IMR-90 (cell line): ENCODE measurements at regions of chr1 and their contacts with region 1.

Region 1: GRCh38 chr1:20640183-20640597 is 6.9 kb downstream of the PINK1 start:
- DNase-seq: peak; percentile 54
- ATAC-seq: peak; percentile 76
- H3K4me3 ChIP-seq: no peak overlapping the region
- H3K27ac ChIP-seq: no peak overlapping the region
- H3K4me1 ChIP-seq: no peaks in the 10 kb centered on the region
- H3K27me3 ChIP-seq: no peaks in the 10 kb centered on the region
- CTCF ChIP-seq: peak; percentile 82
- POLR2A ChIP-seq: no peak
- RAD21 ChIP-seq: peak; percentile 86

Region 2: DNA sequence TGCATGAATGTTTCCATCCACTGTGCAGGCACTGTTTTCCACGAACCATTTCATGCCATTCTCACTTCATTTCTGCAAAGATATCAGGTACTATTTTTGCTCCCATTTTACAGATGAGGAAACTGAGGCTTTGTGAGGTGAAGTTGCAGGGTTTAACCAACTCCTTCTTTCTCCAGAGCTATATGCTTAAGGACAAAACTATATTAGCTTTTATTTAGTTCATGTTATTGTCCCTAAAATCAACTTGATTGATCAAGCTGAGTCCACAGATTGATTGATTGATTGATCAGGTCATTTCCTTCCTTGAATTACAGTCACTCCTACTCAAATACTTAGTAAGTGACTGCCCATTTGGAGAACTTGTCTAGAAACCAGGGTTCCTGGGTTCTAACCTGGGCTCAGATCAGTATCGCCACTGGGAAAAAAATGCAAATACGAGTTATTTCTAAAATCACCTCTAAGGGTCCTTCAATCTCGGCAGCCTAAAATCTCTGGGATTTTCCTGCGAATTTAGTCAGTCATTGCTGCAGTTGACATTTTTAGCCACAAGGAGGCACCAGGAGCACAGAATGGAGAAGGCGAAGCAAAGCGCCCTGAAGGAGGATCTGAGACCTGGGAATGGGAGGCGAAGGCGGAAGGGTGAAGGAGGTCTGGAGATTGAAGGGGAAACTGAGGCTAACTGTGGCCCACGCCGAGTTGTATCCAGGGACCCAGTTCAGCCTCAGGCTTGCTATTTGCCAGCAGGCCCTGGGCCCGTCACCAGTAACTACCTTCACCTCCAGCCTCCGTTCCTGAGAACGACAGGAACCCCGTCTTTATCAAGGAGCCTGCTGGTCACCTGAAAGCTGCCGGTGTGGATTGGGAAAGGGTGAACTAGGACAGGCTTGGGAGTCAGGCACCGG is 118.0 kb before region 1 on chr1:
- CTCF ChIA-PET with region 1: no interaction called
- POLR2A ChIA-PET with region 1: no interaction called
- dilution Hi-C with region 1: no loop called
- in situ Hi-C with region 1: loop called (anchors 5 kb)
- intact Hi-C with region 1: loop called (anchors 1 kb)
- DNase-seq: peak; percentile 74
- ATAC-seq: peak; percentile 99
- H3K4me3 ChIP-seq: no peak overlapping the region; the same call in 1 of the 2 replicates
- H3K27ac ChIP-seq: no peak overlapping the region
- H3K4me1 ChIP-seq: no peaks in the 10 kb centered on the region
- H3K27me3 ChIP-seq: peaks cover 22% of the 10 kb centered on the region
- CTCF ChIP-seq: peak; percentile 97
- POLR2A ChIP-seq: 0 out of 2 replicates have a peak, but pooled peaks have one; percentile 29
- RAD21 ChIP-seq: peak; percentile 97

Region 3: GRCh38 chr1:20786253-20787028 is 146.3 kb after region 1 on chr1:
- CTCF ChIA-PET with region 1: no interaction called
- POLR2A ChIA-PET with region 1: no interaction called
- dilution Hi-C with region 1: no loop called
- in situ Hi-C with region 1: no loop called
- intact Hi-C with region 1: no loop called
- DNase-seq: peak; percentile 92
- ATAC-seq: peak; percentile 87
- H3K4me3 ChIP-seq: peak overlapping the region; percentile 85
- H3K27ac ChIP-seq: peak overlapping the region; percentile 92
- H3K4me1 ChIP-seq: peaks cover 2% of the 10 kb centered on the region; the same call in 1 of the 2 replicates
- H3K27me3 ChIP-seq: no peaks in the 10 kb centered on the region
- CTCF ChIP-seq: 0 out of 2 replicates have a peak, but pooled peaks have one; percentile 0
- POLR2A ChIP-seq: no peak; the same call in none of the 2 replicates
- RAD21 ChIP-seq: peak; percentile 1; the same call in 1 of the 2 replicates